T-cell (primary cell): ENCODE measurements at regions of chr3 and their contacts with region 1.

Region 1: DNA sequence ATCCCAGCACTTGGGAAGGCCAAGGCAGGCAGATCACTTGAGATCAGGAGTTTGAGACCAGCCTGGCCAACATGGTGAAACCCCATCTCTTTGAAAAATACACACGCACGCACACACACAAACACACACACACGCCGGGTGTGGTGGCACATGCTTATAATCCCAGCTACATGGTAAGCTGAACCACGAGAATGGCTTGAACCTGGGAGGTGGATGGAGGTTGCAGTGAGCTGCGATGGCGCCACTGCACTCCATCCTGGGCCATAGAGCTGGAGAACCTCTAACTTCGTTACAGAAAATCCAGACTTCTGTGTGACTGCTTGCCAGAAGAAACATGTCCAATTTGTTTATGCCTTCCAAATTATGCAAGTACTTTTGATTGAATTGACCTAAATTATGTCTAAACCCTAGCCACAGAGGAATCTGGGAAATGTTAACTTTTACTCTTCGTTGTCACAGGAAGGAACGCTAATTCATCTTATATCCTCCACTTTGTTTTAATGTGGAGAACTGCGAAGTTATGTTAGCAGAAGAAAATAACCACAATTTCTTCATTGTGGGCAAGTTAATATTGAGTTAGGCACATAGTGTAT is 21.7 kb downstream of the TRIM59 start:
- DNase-seq: no peak
- ATAC-seq: no peak
- H3K4me3 ChIP-seq: no peak overlapping the region
- H3K4me3 Mint-ChIP-seq: no peak overlapping the region
- H3K27ac ChIP-seq: no peak overlapping the region
- H3K27ac Mint-ChIP-seq: no peak overlapping the region
- H3K4me1 ChIP-seq: peaks cover 0 to 12% of the 10 kb centered on the region in 2 experiments
- H3K4me1 Mint-ChIP-seq: peaks cover 0 to 2% (median 2%) of the 10 kb centered on the region in 3 donors
- H3K27me3 ChIP-seq: no peaks in the 10 kb centered on the region
- H3K27me3 Mint-ChIP-seq: no peaks in the 10 kb centered on the region

Region 2: GRCh38 chr3:160084998-160085397 is 342.9 kb before region 1 on chr3:
- CTCF ChIA-PET with region 1: no interaction called
- POLR2A ChIA-PET with region 1: no interaction called
- DNase-seq: no peak
- ATAC-seq: no peak
- H3K4me3 ChIP-seq: no peak overlapping the region
- H3K4me3 Mint-ChIP-seq: no peak overlapping the region
- H3K27ac ChIP-seq: no peak overlapping the region
- H3K27ac Mint-ChIP-seq: no peak overlapping the region
- H3K4me1 ChIP-seq: no peaks in the 10 kb centered on the region
- H3K4me1 Mint-ChIP-seq: no peaks in the 10 kb centered on the region
- H3K27me3 ChIP-seq: no peaks in the 10 kb centered on the region
- H3K27me3 Mint-ChIP-seq: no peaks in the 10 kb centered on the region

Region 3: DNA sequence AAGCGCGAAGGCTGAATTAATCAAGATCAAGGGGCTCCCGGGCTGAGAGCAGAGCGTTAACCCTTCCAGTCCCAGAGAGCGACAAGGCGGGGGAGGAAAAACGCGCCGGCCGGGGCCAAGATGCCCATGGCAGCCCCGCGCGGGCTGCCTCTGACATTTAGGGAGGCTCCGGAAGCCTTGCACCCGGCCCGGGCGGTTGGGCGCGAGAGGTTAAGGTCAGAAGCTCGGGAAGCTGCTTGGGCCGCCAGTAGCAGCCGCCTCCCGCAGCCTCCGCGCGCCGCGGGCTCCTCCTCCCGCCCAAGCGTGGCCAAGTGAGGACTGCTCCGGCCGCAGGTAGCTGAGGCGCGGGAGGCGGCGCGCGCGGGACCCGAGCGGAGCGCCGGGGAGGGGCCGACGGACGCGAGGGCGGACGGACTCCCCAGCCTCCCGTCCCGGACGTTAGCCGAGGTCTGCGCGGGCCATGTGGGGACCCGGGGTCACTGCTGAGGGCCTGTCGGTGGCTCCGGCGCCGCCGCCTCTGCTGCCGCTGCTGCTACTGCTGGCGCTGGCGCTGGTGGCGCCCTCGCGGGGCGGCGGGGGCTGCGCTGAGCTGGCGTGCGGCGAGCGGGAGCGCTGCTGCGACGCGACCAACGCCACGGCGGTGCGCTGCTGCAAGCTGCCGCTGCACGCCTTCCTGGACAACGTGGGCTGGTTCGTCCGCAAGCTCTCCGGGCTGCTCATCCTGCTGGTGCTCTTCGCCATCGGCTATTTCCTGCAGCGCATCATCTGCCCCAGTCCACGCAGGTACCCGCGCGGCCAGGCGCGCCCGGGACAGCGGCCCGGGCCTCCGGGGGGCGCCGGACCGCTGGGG is 202.5 kb before region 1 on chr3 and contains the start of gene C3orf80:
- CTCF ChIA-PET with region 1: no interaction called
- POLR2A ChIA-PET with region 1: no interaction called
- DNase-seq: peak in 29 of 35 experiments; percentile 6 to 58 (median 22)
- ATAC-seq: peak; percentile 82 to 89 (median 84)
- H3K4me3 ChIP-seq: peak within 1 kb of the TSS; percentile 34 to 83
- H3K4me3 Mint-ChIP-seq: peak within 1 kb of the TSS; percentile 69 to 86 (median 77)
- H3K27ac ChIP-seq: no peak within 1 kb of the TSS
- H3K27ac Mint-ChIP-seq: peak within 1 kb of the TSS in 1 of 2 donors; percentile 57
- H3K4me1 ChIP-seq: peaks cover 4 to 21% of the 10 kb centered on the region in 2 experiments
- H3K4me1 Mint-ChIP-seq: peaks cover 14 to 21% (median 21%) of the 10 kb centered on the region in 3 donors
- H3K27me3 ChIP-seq: peaks cover 5 to 34% of the 10 kb centered on the region in 2 experiments
- H3K27me3 Mint-ChIP-seq: peaks cover 44 to 45% of the 10 kb centered on the region in 2 donors
- total RNA-seq, gene C3orf80: 0.13 to 0.35 (median 0.33) TPM in 3 of 5 donors, not detected in the others

Region 4: DNA sequence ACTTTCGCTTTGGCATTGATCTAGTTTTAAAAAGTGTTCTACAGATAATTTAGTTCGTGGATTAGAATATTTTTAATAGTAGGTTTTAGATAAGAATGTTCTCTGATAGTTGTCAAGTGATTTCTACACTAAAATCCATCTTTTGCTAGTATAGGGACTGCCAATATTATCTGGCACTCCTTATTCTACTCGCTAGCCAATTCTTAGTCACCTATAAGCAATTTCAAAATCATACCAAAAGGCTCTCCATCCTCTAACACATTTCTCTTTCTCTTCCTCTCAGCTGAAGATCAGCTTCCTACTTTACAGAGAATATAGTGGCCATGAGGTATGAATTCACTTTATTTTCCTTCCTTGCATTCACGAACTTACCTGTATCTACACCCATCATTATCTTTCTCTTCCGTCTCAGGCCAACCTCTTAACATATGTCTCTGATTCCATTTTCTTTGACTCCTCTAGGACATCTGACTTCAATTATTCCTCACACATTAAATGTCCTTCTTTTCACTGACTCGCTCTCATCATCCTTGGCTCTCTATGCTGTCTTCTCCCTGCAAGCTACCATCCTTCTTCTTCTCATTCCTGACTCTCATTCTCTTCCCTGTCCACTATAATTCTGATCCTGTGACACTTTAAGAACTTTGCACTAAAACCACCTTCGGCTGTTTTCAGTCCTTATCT is 167.2 kb before region 1 on chr3:
- CTCF ChIA-PET with region 1: no interaction called
- POLR2A ChIA-PET with region 1: interaction called in 1 of 2 experiments, 11 read pairs
- DNase-seq: no peak
- ATAC-seq: no peak
- H3K4me3 ChIP-seq: no peak overlapping the region
- H3K4me3 Mint-ChIP-seq: no peak overlapping the region
- H3K27ac ChIP-seq: no peak overlapping the region
- H3K27ac Mint-ChIP-seq: no peak overlapping the region
- H3K4me1 ChIP-seq: no peaks in the 10 kb centered on the region
- H3K4me1 Mint-ChIP-seq: peaks cover 0 to 7% (median 6%) of the 10 kb centered on the region in 3 donors
- H3K27me3 ChIP-seq: no peaks in the 10 kb centered on the region
- H3K27me3 Mint-ChIP-seq: no peaks in the 10 kb centered on the region